ENCODE measurements at regions of chr22 and their contacts with region 1.

Region 1: DNA sequence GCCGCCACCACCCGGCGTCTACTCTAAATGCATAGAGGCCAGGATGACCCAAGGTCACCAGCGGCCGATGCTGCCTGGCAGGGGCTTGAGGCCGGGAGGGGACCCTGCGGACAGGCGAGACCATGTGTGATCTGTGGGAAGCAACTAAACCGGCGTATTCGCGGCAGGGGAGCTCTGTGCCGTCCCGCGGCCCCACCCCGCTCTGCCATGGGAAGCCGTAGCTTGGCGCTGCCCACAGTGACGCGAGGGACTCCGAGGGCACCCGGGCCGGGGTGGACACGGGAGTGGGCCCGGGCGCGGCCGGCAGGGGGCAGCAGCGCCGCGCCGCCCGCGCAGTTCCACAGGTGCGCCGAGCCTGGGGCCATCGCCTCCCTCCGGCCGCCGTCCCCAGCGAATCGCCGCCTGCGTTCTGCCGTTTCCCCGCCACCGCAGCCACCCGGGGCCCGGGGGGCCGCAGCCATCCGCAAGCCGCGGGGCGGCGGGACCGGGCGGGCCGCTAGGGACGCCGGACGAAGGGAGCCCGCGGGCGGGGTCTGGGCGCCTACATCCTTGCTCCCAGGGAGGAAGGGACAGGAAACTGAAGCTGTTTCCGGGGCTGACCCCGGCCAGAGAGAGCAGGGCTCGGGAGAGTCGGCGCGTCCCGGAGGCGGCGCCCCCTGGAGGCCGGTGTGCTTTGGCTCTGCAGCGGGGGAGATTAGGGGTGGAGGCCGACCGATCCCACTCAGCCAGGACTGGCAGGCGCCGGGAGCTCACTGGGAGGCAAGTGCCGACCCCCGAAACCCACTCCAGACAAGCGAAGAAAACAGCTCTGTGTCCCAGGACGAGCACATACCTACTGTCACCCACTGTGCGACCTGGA is 12.5 kb upstream of the HDHD5 start:
- DNase-seq: peak; percentile 87
- ATAC-seq: peak; percentile 95
- H3K4me3 Mint-ChIP-seq: peak overlapping the region; percentile 78
- H3K27ac Mint-ChIP-seq: peak overlapping the region; percentile 80
- H3K4me1 Mint-ChIP-seq: peaks cover 7% of the 10 kb centered on the region
- H3K27me3 Mint-ChIP-seq: peaks cover 7% of the 10 kb centered on the region

Region 2: DNA sequence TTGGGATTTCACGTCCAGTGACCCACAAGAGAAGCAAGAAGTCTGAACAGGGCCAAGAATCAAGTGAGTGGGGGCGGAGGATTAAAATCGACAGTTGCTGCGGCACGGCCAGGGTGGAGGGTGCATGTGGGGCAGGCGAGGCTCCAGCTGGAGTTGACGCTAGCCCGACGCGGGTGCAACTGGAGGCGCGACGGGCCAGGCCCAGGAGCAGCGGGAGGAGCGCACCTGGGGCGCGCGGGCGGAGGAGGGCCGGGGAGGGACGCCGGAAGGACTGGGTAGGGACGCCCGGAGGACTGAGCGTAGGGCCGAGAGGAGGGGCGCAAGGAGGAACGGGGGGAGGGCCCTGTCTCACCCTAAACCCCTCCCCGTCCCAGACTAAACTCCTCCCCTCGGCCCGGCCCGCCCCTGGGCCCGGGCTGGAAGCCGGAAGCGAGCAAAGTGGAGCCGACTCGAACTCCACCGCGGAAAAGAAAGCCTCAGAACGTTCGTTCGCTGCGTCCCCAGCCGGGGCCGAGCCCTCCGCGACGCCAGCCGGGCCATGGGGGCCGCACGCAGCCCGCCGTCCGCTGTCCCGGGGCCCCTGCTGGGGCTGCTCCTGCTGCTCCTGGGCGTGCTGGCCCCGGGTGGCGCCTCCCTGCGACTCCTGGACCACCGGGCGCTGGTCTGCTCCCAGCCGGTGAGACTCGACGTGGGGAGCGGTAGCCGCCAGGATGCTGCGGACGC is 86.8 kb before region 1 on chr22 and contains the start of gene IL17RA:
- CTCF ChIA-PET with region 1: interaction called, 20 read pairs
- DNase-seq: peak; percentile 96
- ATAC-seq: peak; percentile 98
- H3K4me3 Mint-ChIP-seq: peak within 1 kb of the TSS; percentile 80
- H3K27ac Mint-ChIP-seq: peak within 1 kb of the TSS; percentile 84
- H3K4me1 Mint-ChIP-seq: peaks cover 49% of the 10 kb centered on the region
- H3K27me3 Mint-ChIP-seq: peaks cover 16% of the 10 kb centered on the region
- total RNA-seq, gene IL17RA: 22.5 to 25.1 TPM

Region 3: GRCh38 chr22:17149076-17149810 is 22.3 kb before region 1 on chr22:
- CTCF ChIA-PET with region 1: interaction called, 11 read pairs
- DNase-seq: no peak
- ATAC-seq: no peak
- H3K4me3 Mint-ChIP-seq: no peak overlapping the region
- H3K27ac Mint-ChIP-seq: no peak overlapping the region
- H3K4me1 Mint-ChIP-seq: peaks cover 10% of the 10 kb centered on the region
- H3K27me3 Mint-ChIP-seq: no peaks in the 10 kb centered on the region

Region 4: GRCh38 chr22:17191163-17191784 is 19.7 kb after region 1 on chr22:
- CTCF ChIA-PET with region 1: interaction called, 16 read pairs
- DNase-seq: no peak
- ATAC-seq: no peak
- H3K4me3 Mint-ChIP-seq: no peak overlapping the region
- H3K27ac Mint-ChIP-seq: no peak overlapping the region
- H3K4me1 Mint-ChIP-seq: no peaks in the 10 kb centered on the region
- H3K27me3 Mint-ChIP-seq: no peaks in the 10 kb centered on the region

Region 5: DNA sequence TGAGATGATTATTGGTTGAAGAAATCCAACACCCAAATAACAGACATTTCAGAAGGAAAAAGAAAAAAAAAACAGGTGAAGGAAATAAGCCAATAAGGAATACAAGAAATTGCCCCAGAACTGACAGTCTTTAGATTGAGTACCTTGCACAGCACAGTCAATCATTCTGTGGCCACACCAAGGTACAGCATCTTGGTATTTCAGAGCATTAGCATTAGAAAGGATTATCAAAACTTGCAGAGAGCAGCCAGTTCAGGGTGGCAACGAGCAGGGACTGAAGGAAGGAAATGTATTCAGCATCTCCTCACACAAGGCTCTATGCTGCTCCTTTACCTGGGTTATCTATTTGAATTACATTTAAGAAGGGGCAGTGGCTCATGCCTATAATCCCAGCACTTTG is 45.6 kb after region 1 on chr22:
- CTCF ChIA-PET with region 1: interaction called, 20 read pairs
- DNase-seq: peak; percentile 60
- ATAC-seq: peak; percentile 42
- H3K4me3 Mint-ChIP-seq: peak overlapping the region; percentile 75
- H3K27ac Mint-ChIP-seq: peak overlapping the region; percentile 89
- H3K4me1 Mint-ChIP-seq: peaks cover 68% of the 10 kb centered on the region
- H3K27me3 Mint-ChIP-seq: no peaks in the 10 kb centered on the region

Region 6: DNA sequence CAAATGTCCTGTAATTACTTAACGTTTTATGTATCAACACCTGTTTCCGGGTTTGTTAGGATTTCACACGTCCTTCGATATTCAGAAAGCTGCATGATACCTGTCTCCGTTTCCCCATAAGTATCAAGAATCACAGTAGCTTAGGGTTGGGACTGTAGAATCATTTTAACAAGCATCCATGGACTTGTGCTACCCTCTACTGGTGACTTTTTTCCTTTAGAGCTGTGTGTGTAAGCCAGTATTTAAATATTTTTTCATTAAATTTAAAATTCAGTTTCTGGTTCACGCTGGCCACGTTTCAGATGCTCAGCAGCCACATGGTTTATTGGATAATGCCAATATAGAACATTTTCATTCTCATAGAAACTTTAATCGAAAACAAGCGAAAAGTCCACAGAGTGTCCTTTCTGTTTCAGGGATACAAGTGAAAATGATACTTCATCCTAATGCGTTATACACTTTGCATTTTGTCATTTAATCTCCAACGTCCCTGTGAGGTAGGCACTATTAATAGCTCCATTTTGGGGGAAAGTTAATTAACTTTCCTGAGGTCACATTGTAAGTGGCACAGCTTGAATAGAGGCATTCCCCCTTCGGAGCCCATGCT is 330.2 kb after region 1 on chr22:
- CTCF ChIA-PET with region 1: interaction called, 76 read pairs
- DNase-seq: no peak
- ATAC-seq: peak; percentile 73
- H3K4me3 Mint-ChIP-seq: no peak overlapping the region
- H3K27ac Mint-ChIP-seq: no peak overlapping the region
- H3K4me1 Mint-ChIP-seq: no peaks in the 10 kb centered on the region
- H3K27me3 Mint-ChIP-seq: peaks cover 11% of the 10 kb centered on the region